Endothelial cell of umbilical vein (primary cell): ENCODE measurements at regions of chr6 and their contacts with region 1.

Region 1: DNA sequence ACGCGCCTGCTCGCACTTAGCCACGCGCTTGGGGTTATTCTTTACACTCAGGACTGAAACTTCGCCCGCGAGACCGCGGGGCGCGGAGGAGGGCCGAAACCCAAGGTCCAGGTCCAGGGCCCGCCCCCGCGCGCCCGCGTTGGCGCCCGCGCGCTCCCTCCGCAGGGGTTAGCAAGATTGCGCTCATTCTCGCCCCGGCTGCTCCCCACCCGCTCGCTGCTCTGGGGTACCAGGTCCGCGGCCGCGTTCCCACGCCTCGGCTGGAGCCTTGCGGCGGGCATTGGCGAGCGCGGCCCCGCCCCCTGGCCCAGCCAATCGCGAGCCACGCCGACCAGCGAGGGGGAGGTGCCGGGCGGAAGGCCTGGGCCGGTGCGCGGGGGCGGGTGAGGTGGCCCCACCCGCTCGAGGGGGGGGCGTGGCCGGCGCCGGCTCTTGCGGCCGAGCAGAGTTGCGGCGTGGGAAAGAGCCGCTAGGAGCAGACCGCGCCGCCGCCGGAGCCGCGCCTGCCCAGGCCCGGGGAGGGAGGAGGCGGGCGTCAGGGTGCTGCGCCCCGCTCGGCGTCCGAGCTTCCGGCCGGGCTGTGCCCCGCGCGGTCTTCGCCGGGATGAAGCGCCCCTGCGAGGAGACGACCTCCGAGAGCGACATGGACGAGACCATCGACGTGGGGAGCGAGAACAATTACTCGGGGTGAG is at the start of gene HEY2:
- DNase-seq: peak; percentile 83
- H3K4me3 ChIP-seq: peak within 1 kb of the TSS; percentile 55 to 73 (median 71)
- H3K27ac ChIP-seq: peak within 1 kb of the TSS; percentile 23
- H3K4me1 ChIP-seq: peaks cover 25% of the 10 kb centered on the region
- H3K27me3 ChIP-seq: peaks cover 64 to 66% of the 10 kb centered on the region in 2 experiments
- CTCF ChIP-seq: no peak
- POLR2A ChIP-seq: no peak
- total RNA-seq, gene HEY2: not detected in 2 replicates

Region 2: DNA sequence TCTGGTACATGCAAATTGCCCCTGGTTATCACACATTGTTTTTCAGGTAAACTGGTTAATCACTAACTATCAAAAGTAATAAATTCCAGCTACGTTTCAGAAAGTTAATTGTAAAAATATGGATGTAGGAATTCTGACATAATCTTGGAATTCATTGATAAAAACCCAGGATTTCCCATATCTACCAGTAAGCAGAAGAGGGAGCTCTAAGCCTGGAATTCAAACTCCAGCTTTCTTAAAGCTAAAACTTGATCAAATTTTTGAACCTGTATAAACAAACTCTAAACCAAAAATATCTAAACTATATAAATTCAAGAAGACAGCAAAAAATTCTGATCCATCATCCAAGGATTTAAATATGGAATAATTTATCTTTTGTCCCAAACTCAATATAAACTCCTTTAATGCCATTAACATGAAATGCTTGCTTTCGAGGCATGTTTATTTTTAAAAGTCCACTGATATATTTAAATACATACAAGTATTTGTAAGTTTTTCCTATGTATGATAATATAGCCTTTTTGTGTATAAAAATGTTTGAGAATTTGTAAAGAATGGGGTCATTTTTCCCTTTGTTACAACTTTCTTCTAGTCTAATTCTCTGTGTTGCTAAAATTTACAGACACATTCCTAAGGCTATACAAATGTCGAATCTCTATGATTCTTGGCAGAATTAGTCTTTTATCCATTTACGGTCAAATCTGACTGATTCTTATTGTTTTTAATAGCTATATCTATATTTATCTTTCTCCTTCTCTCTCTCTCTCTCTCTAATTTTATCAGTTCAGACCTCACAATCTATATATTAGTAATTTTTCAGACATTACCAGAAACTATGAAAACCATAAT is 878.5 kb before region 1 on chr6:
- CTCF ChIA-PET with region 1: interaction called, 19 read pairs
- POLR2A ChIA-PET with region 1: no interaction called
- dilution Hi-C with region 1: no loop called
- intact Hi-C with region 1: loop called (anchors 5 kb)
- DNase-seq: peak; percentile 46
- H3K4me3 ChIP-seq: no peak overlapping the region
- H3K27ac ChIP-seq: no peak overlapping the region
- H3K4me1 ChIP-seq: no peaks in the 10 kb centered on the region
- H3K27me3 ChIP-seq: no peaks in the 10 kb centered on the region
- CTCF ChIP-seq: peak; percentile 31 to 51
- POLR2A ChIP-seq: no peak

Region 3: GRCh38 chr6:125314019-125314581 is 435.2 kb before region 1 on chr6:
- CTCF ChIA-PET with region 1: interaction called, 439 read pairs
- POLR2A ChIA-PET with region 1: no interaction called
- dilution Hi-C with region 1: no loop called
- intact Hi-C with region 1: loop called (anchors 1 kb)
- DNase-seq: peak; percentile 62
- H3K4me3 ChIP-seq: no peak overlapping the region
- H3K27ac ChIP-seq: no peak overlapping the region
- H3K4me1 ChIP-seq: no peaks in the 10 kb centered on the region
- H3K27me3 ChIP-seq: peaks cover under 1 to 15% of the 10 kb centered on the region in 2 experiments
- CTCF ChIP-seq: peak; percentile 76 to 81
- POLR2A ChIP-seq: no peak

Region 4: DNA sequence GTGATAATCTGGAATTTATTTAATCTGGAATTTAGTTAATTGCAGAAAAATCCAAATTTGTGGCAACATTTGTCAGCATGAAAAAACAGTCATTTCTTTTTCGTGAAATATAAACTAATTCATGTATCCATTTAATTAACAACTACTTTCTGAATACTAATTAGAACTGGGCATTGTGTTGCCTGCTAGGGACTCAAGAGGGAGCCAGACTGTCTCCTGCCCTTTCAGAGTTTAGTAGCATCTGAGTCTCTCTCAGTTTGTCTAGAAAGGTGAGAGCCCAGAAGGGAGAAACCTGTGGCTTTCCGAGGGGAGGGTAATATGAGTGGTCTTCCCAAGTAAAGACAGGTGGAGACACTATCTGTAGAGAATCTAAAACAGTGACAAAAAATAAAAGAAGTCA is 236.7 kb before region 1 on chr6:
- CTCF ChIA-PET with region 1: interaction called, 3 read pairs
- POLR2A ChIA-PET with region 1: no interaction called
- dilution Hi-C with region 1: no loop called
- intact Hi-C with region 1: loop called (anchors 5 kb)
- DNase-seq: no peak
- H3K4me3 ChIP-seq: no peak overlapping the region
- H3K27ac ChIP-seq: no peak overlapping the region
- H3K4me1 ChIP-seq: no peaks in the 10 kb centered on the region
- H3K27me3 ChIP-seq: peaks cover 0 to 5% of the 10 kb centered on the region in 2 experiments
- CTCF ChIP-seq: peak; percentile 12 to 22
- POLR2A ChIP-seq: no peak

Region 5: DNA sequence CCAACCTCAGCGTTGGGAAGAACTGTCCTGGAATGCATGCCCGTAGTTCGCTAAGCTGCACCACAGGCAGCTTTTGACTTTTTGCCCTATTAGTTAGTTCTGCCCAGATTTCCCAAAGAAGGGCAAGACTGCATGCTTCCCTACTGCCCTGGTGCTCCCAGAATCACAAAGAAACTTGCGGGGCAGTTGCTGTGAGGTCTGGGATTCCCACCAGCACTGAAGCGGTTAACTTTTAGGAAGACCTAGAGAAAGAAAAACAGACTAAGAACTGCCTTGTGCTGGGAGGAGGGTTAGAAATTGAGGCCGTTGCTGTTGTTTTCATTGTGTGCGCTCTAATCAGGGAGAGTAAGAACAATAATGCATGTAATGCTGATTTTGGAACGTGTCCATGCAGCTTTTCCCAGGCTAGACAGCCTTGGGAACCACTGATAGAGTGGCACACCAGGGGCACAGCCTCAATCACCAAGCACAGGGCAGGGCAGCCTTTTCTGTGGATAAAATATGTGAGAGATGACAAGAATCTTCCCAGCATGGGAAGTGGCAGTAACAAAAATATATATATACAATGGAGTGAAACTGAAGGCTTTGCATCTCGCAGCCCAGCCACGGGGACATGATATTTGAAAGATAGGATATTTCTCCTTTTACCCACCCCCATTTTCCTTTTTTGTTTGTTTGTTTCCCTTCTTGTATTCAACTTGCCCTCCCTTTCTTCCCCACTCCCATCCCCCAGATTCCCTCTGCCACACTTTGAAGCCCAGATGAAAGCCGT is 137.6 kb before region 1 on chr6:
- CTCF ChIA-PET with region 1: no interaction called
- POLR2A ChIA-PET with region 1: no interaction called
- dilution Hi-C with region 1: no loop called
- intact Hi-C with region 1: loop called (anchors 2 kb)
- DNase-seq: peak; percentile 96
- H3K4me3 ChIP-seq: peak overlapping the region in 1 of 3 experiments; percentile 4
- H3K27ac ChIP-seq: peak overlapping the region; percentile 62
- H3K4me1 ChIP-seq: peaks cover 17% of the 10 kb centered on the region
- H3K27me3 ChIP-seq: peaks cover 0 to 9% of the 10 kb centered on the region in 2 experiments
- CTCF ChIP-seq: no peak
- POLR2A ChIP-seq: no peak

Region 6: GRCh38 chr6:125779924-125780539 is 30.7 kb after region 1 on chr6:
- CTCF ChIA-PET with region 1: interaction called, 4 read pairs
- POLR2A ChIA-PET with region 1: interaction called, 3 read pairs
- dilution Hi-C with region 1: no loop called
- intact Hi-C with region 1: loop called (anchors 1 kb)
- DNase-seq: peak; percentile 96
- H3K4me3 ChIP-seq: peak overlapping the region; percentile 62 to 95 (median 84)
- H3K27ac ChIP-seq: peak overlapping the region; percentile 94
- H3K4me1 ChIP-seq: peaks cover 8% of the 10 kb centered on the region
- H3K27me3 ChIP-seq: peaks cover 8 to 10% of the 10 kb centered on the region in 2 experiments
- CTCF ChIP-seq: peak in 1 of 2 donors; percentile 5
- POLR2A ChIP-seq: no peak